ENCODE measurements at regions of chr1 and their contacts with region 1.

Region 1: DNA sequence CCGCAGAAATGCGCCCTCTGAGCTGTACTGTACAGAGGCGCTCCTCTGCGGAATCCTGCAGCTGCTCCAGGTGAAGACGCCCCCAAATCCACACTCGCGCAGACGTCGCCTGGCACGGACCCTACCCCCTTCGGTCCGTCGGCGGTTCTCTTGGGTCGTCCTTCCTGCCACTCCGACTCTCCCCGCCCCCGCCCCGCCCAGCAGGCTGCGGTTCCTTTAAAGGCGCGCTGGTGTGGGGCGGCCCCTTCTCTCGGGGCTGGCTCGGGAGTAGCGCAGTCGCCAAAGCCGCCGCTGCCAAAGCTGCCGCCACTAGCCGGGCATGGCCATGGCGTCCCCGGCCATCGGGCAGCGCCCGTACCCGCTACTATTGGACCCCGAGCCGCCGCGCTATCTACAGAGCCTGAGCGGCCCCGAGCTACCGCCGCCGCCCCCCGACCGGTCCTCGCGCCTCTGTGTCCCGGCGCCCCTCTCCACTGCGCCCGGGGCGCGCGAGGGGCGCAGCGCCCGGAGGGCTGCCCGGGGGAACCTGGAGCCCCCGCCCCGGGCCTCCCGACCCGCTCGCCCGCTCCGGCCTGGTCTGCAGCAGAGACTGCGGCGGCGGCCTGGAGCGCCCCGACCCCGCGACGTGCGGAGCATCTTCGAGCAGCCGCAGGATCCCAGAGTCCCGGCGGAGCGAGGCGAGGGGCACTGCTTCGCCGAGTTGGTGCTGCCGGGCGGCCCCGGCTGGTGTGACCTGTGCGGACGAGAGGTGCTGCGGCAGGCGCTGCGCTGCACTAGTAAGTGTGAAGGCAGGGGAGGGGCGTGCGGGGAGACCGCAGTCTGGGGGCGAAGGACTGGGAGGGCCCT is at the start of gene RASSF5:
- DNase-seq: peak; percentile 29
- H3K4me3 ChIP-seq: peak within 1 kb of the TSS in 1 of 3 experiments; percentile 27
- H3K27ac ChIP-seq: no peak within 1 kb of the TSS
- H3K4me1 ChIP-seq: no peaks in the 10 kb centered on the region
- H3K27me3 ChIP-seq: peaks cover 65 to 75% of the 10 kb centered on the region in 2 experiments
- CTCF ChIP-seq: no peak
- POLR2A ChIP-seq: no peak
- total RNA-seq, gene RASSF5: 0.44 and 0.60 TPM in 2 replicates

Region 2: DNA sequence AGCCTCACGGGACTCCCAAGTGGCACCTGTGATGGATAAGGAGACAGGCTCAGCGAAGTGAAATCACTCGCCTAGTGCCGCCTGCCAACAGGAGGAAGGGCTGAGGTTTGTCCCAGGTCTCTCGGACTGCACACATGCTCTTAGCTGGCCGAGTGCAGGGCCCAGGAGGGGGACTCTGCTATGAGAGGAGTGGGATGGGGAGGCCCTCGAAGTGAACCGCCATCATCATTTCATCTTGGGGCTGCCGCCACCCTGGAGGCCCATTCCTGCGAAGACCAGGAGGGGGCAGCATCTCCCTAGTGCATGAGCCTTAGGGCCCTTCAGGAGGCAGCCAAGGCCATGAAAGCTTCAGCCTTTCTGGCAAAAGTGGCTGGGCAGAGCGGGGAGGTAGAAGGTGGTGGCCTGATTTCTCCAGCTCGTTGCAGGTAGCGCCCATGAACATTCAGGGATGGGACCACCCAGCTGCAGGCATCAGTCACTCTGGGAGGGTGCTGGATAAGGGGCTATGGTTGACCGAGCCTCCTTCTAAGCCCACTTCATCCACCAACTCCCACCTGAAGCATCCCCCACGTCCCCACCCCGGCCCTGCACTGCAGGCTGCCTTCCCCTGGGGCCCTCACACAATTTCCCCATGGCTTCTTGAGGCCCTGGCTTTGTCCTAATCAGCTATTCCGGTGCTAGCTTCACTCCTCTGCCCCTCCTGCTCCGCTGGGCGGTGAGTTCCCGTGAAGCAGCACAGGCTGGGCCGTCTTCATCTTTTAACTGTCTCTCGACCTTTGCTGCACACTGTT is 17.3 kb before region 1 on chr1:
- CTCF ChIA-PET with region 1: interaction called, 13 read pairs
- POLR2A ChIA-PET with region 1: no interaction called
- dilution Hi-C with region 1: no loop called
- intact Hi-C with region 1: no loop called
- DNase-seq: peak; percentile 59
- H3K4me3 ChIP-seq: no peak overlapping the region
- H3K27ac ChIP-seq: no peak overlapping the region
- H3K4me1 ChIP-seq: peaks cover 8% of the 10 kb centered on the region
- H3K27me3 ChIP-seq: no peaks in the 10 kb centered on the region
- CTCF ChIP-seq: peak; percentile 83 to 92
- POLR2A ChIP-seq: no peak

Region 3: GRCh38 chr1:206524739-206525369 is 17.3 kb after region 1 on chr1:
- CTCF ChIA-PET with region 1: no interaction called
- POLR2A ChIA-PET with region 1: interaction called, 5 read pairs
- dilution Hi-C with region 1: no loop called
- intact Hi-C with region 1: loop called (anchors 1 kb)
- DNase-seq: no peak
- H3K4me3 ChIP-seq: no peak overlapping the region
- H3K27ac ChIP-seq: no peak overlapping the region
- H3K4me1 ChIP-seq: no peaks in the 10 kb centered on the region
- H3K27me3 ChIP-seq: peaks cover 0 to 8% of the 10 kb centered on the region in 2 experiments
- CTCF ChIP-seq: no peak
- POLR2A ChIP-seq: no peak

Measured in endothelial cell of umbilical vein (primary cell).